Ovary (tissue), 10 donors: ENCODE measurements at regions of chrX and their contacts with region 1.

Region 1: GRCh38 chrX:40266490-40267333 is 169.0 kb upstream of the BCOR start:
- DNase-seq: peak; percentile 61 to 83 (median 75)
- H3K4me3 ChIP-seq: peak overlapping the region; percentile 42
- H3K27ac ChIP-seq: peak overlapping the region in 1 of 2 donors; percentile 72
- H3K4me1 ChIP-seq: peaks cover 6% of the 10 kb centered on the region
- H3K27me3 ChIP-seq: no peaks in the 10 kb centered on the region
- CTCF ChIP-seq: peak; percentile 43 to 59 (median 51)
- EP300 ChIP-seq: no peak
- POLR2A ChIP-seq: no peak

Region 2: GRCh38 chrX:39814391-39814790 is 452.3 kb before region 1 on chrX:
- intact Hi-C with region 1: loop called in 1 of 4 experiments (anchors 10 kb)
- DNase-seq: no peak
- H3K4me3 ChIP-seq: no peak overlapping the region
- H3K27ac ChIP-seq: no peak overlapping the region
- H3K4me1 ChIP-seq: peaks cover 3% of the 10 kb centered on the region
- H3K27me3 ChIP-seq: no peaks in the 10 kb centered on the region
- CTCF ChIP-seq: peak in 1 of 3 donors; percentile 34
- EP300 ChIP-seq: no peak
- POLR2A ChIP-seq: no peak

Region 3: DNA sequence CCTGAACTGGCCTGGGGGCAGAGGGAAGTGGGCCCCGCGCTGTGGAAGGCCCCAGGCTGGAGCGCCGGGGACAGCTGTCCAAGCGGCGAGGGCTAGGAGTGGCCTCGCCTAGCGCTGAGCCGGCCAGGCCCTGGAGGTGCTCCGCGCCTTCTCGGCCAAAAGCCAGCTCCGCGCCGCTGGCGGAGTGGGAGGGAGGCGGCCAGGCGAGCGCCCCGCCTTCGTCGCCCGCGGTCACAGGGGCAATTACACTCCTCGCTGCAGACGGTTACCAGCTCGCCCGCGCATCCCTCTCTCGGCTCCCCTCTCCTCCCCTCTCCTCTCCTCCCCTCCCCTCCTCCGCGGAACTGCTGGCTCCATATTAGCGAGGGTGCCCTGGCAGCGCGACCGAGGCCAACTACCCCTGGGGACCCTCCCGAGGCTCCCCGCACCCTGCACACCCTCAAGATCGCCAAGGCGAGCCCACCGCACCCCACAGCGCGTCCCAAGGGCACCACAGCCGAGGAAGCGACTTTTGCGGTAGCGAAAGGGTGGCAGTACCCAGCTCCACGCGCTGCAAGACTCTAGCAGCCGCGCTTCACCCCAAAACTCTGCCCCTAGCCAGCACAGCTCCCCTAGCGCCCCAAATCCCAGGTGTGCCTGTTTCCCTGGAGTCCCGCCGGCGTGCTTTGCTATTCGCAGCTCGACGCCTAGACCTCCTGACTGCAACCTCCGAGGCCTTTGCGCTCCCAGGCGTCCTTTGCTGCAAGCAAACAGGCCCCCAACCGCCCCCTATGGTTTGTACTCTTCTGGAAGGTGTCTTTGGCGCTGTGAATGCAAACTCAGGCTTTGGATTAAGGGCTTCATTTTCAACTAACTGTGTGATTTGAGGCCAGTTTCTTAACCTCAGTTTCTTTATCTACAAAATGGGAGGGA is 260.4 kb before region 1 on chrX:
- intact Hi-C with region 1: loop called in 1 of 4 experiments (anchors 10 kb)
- DNase-seq: peak; percentile 53 to 69 (median 60)
- H3K4me3 ChIP-seq: no peak overlapping the region
- H3K27ac ChIP-seq: no peak overlapping the region
- H3K4me1 ChIP-seq: peaks cover 3% of the 10 kb centered on the region
- H3K27me3 ChIP-seq: no peaks in the 10 kb centered on the region
- CTCF ChIP-seq: no peak
- EP300 ChIP-seq: no peak
- POLR2A ChIP-seq: no peak

Region 4: DNA sequence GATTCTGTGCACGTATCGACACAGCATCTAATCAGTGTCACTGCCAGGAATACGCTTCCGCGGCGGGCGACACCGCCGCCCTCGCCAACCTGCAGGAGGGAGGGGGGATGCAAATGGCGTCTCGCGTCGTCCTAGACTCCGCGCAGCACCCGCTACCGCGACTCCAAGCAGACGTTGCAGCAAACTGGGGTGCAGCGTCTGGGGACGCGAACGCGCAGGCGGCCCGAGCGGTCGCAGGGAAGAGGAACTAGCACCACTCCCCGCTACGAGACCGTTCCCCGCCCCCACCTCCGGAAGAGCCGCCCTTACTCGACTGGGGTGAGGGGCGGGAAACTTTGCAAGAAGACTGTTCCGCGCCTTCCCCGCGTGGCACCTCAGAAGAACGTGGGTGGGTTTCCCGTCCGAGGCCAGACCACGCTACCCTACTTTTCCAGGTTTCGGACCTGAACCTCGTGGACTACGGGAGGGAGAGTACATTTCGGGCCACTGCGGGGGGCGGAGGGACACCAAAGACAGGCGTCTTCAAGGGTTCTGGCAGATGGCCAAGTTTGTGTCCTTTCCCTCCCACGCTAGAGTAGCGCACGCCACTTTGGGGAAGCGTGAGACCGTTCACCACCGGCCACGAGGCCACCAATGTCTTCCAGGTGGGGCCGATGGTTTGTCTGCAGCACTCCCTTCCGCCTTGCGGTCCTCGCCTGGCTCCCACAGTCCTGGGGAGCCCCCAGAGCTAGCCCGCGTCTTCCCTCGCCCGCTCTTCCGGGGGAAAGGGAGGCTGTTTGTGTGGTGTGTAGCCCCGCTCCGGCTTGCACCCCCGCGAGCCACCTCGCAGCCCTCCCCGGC is 91.0 kb before region 1 on chrX:
- intact Hi-C with region 1: loop called in 1 of 4 experiments (anchors 5 kb)
- DNase-seq: peak; percentile 69 to 77 (median 76)
- H3K4me3 ChIP-seq: peak overlapping the region; percentile 62
- H3K27ac ChIP-seq: peak overlapping the region; percentile 68 to 89
- H3K4me1 ChIP-seq: no peaks in the 10 kb centered on the region
- H3K27me3 ChIP-seq: no peaks in the 10 kb centered on the region
- CTCF ChIP-seq: no peak
- EP300 ChIP-seq: no peak
- POLR2A ChIP-seq: peak; percentile 2

Region 5: GRCh38 chrX:40411340-40412111 is 144.8 kb after region 1 on chrX:
- intact Hi-C with region 1: no loop called
- DNase-seq: no peak
- H3K4me3 ChIP-seq: no peak overlapping the region
- H3K27ac ChIP-seq: no peak overlapping the region
- H3K4me1 ChIP-seq: no peaks in the 10 kb centered on the region
- H3K27me3 ChIP-seq: no peaks in the 10 kb centered on the region
- CTCF ChIP-seq: no peak
- EP300 ChIP-seq: no peak
- POLR2A ChIP-seq: no peak

Region 6: DNA sequence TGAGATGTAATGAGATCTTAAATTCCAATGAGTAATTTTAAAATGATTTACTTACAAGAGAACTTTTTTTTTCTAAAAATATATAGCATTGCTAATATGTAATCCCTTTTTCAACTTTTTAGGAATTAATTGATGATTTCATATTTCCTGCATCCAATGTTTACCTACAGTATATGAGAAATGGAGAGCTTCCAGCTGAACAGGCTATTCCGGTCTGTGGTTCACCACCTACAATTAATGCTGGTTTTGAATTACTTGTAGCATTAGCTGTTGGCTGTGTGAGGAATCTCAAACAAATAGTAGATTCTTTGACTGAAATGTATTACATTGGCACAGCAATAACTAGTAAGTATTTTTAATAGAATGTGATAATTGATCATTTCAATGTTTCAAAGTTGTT is 931.7 kb after region 1 on chrX:
- intact Hi-C with region 1: no loop called
- DNase-seq: no peak
- H3K4me3 ChIP-seq: no peak overlapping the region
- H3K27ac ChIP-seq: no peak overlapping the region
- H3K4me1 ChIP-seq: no peaks in the 10 kb centered on the region
- H3K27me3 ChIP-seq: no peaks in the 10 kb centered on the region
- CTCF ChIP-seq: no peak
- EP300 ChIP-seq: no peak
- POLR2A ChIP-seq: no peak